AG04450 (cell line): ENCODE measurements at regions of chr2 and their contacts with region 1.

Region 1: GRCh38 chr2:29841386-29842004 is 79.9 kb downstream of the ALK start:
- DNase-seq: peak; percentile 3
- H3K4me3 ChIP-seq: no peak overlapping the region
- H3K27ac ChIP-seq: no peak overlapping the region
- H3K27me3 ChIP-seq: peaks cover 4% of the 10 kb centered on the region
- CTCF ChIP-seq: peak; percentile 99

Region 2: DNA sequence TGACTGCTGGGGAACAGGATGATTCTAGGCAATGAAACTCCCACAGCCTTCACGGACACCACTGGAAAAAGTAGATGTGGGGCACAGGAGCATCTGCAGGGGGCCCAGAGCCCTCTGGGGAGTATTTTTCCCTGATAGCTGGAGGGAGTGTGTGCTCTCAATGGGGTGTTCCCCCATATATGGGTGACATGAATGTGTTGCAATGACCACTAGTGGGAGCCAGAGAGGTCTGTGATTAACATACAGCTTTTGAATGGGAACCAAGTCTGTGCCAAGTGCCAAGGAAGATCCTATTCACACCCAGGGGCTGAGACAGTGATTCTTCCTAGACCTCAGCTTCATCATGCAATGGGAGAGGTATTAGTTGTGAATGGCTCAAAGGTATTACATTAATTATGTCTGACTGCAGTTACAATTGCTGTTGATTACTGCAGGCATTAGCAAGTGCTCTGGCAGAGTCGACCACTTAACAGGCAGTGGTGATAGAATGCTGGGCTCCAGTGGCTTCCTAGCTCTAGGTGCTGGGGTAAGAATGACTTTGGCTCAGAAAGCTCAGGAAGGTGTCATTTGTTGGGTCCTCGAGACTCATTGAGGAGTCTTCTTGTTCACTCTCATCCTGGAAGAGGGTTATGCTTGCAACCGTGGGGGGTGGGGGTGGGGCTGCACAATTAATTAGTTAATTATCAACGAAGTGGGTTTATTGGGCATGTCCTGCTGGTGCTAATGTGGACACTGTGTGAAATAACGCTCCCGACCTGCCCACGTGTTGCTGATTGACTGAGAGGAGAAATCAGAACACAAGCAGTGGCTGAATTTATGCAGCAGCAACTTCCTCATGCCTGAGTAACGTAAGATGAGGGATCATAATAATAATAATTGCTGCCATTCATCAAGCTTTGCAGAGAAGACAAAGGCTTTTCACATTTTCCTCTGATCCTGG is 532.1 kb before region 1 on chr2:
- CTCF ChIA-PET with region 1: interaction called, 51 read pairs
- POLR2A ChIA-PET with region 1: no interaction called
- DNase-seq: peak; percentile 34
- H3K4me3 ChIP-seq: no peak overlapping the region
- H3K27ac ChIP-seq: no peak overlapping the region
- H3K27me3 ChIP-seq: peaks cover 20% of the 10 kb centered on the region
- CTCF ChIP-seq: peak; percentile 89

Region 3: DNA sequence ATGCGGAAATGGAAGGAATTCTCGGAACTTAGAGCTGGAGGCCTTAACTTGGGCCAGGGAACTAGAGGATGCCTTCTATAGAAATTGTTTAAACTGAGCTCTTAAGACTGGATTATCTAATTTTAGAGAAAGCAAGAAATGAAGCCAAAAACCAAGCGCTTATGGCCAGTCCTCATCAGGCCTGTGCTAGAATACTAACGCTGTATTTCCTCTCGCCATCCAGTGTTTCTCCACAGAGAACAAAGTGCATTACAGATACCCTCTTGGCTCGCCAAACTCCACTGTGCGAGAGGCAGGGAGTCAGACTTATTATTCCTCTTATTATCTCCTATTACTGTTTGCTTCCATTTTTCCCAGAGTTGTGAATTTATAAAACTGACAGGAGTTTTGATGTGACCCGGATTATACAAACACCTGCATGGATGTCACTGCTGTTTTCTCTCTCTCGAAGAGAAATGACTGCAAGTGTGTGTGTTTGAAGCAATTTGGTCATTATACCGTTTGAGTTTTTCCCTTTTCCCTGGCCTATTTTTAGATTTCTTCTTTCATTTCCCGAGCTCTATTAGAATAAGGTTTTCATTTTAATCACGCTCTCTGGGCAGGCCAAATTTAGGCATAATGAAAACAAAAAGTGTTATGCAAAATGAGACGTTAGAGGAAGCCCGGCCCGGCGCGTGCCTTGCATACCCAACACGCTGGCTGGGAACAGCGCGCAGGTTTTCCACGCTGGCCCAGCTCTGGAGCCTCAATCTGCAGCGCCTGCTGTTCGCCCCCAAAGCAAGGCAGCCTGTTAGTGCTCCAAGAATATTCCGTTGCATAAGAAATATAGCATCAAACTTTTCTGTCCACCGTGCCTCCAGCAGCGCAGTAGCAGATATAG is 23.5 kb before region 1 on chr2:
- CTCF ChIA-PET with region 1: no interaction called
- POLR2A ChIA-PET with region 1: no interaction called
- DNase-seq: no peak
- H3K4me3 ChIP-seq: no peak overlapping the region
- H3K27ac ChIP-seq: no peak overlapping the region
- H3K27me3 ChIP-seq: peaks cover 23% of the 10 kb centered on the region
- CTCF ChIP-seq: no peak